Activated CD4-positive, alpha-beta T cell treated with anti-CD3 and anti-CD28 coated beads for 36 hours (primary cell): ENCODE measurements at regions of chr3 and their contacts with region 1.

Region 1: GRCh38 chr3:152193673-152194267 is 75.0 kb upstream of the MBNL1 start:
- DNase-seq: peak; percentile 46
- ATAC-seq: peak; percentile 49
- H3K4me3 Mint-ChIP-seq: peak overlapping the region; percentile 66
- H3K27ac Mint-ChIP-seq: peak overlapping the region; percentile 74
- H3K4me1 Mint-ChIP-seq: peaks cover 83% of the 10 kb centered on the region
- H3K27me3 Mint-ChIP-seq: no peaks in the 10 kb centered on the region

Region 2: DNA sequence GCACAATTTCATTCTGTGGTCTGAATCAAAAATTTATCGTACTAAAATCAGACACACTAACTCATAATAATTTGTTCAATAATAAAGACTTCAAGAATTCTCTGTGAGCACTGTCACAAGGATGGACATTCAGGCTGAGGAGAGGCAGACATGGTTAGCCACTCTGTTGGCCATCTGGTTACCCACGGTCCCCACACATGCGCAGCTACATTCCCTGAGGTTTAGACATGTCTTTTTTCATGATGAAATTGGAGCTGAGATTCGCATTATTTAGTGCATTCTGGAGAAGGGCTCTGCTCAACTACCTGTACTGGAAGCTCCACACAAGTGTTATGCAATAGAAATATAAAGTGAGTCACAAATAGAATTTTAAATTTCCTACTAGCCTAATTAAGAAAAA is 163.4 kb before region 1 on chr3:
- CTCF ChIA-PET with region 1: no interaction called
- POLR2A ChIA-PET with region 1: no interaction called
- intact Hi-C with region 1: no loop called
- DNase-seq: no peak
- ATAC-seq: no peak
- H3K4me3 Mint-ChIP-seq: no peak overlapping the region
- H3K27ac Mint-ChIP-seq: no peak overlapping the region
- H3K4me1 Mint-ChIP-seq: no peaks in the 10 kb centered on the region
- H3K27me3 Mint-ChIP-seq: no peaks in the 10 kb centered on the region

Region 3: GRCh38 chr3:152127058-152127457 is 66.7 kb before region 1 on chr3:
- CTCF ChIA-PET with region 1: no interaction called
- POLR2A ChIA-PET with region 1: no interaction called
- intact Hi-C with region 1: loop called (anchors 2 to 5 kb)
- DNase-seq: peak; percentile 33
- ATAC-seq: peak; percentile 95
- H3K4me3 Mint-ChIP-seq: peak overlapping the region; percentile 27
- H3K27ac Mint-ChIP-seq: peak overlapping the region; percentile 51
- H3K4me1 Mint-ChIP-seq: peaks cover 26% of the 10 kb centered on the region
- H3K27me3 Mint-ChIP-seq: no peaks in the 10 kb centered on the region

Region 4: DNA sequence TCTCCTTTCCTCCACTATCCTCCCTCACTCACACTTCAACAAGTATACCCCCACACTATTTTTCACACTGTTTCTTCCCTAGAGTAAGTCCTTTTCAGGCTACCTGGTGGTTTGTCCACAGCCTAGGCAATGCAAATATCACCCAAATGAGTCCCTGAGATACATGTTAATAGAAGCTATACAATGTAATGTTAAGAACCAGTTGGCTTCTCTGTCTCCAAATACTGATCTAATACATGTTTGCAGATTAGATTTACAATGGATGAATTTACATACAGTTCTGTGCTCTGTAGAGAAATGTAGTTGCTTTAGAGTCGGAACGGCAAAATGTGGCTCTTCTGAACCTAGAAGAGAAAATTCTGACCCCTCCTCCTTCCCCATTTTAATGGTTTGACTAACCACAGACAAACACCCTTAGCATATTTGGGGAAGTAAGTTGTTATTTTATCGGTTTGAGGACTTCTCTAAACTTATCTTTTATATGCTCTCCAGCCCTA is 11.4 kb after region 1 on chr3:
- CTCF ChIA-PET with region 1: interaction called, 14 read pairs
- POLR2A ChIA-PET with region 1: interaction called, 3 read pairs
- intact Hi-C with region 1: loop called (anchors 1 kb)
- DNase-seq: no peak
- ATAC-seq: no peak
- H3K4me3 Mint-ChIP-seq: peak overlapping the region; percentile 70
- H3K27ac Mint-ChIP-seq: peak overlapping the region; percentile 92
- H3K4me1 Mint-ChIP-seq: peaks cover 65% of the 10 kb centered on the region
- H3K27me3 Mint-ChIP-seq: no peaks in the 10 kb centered on the region

Region 5: DNA sequence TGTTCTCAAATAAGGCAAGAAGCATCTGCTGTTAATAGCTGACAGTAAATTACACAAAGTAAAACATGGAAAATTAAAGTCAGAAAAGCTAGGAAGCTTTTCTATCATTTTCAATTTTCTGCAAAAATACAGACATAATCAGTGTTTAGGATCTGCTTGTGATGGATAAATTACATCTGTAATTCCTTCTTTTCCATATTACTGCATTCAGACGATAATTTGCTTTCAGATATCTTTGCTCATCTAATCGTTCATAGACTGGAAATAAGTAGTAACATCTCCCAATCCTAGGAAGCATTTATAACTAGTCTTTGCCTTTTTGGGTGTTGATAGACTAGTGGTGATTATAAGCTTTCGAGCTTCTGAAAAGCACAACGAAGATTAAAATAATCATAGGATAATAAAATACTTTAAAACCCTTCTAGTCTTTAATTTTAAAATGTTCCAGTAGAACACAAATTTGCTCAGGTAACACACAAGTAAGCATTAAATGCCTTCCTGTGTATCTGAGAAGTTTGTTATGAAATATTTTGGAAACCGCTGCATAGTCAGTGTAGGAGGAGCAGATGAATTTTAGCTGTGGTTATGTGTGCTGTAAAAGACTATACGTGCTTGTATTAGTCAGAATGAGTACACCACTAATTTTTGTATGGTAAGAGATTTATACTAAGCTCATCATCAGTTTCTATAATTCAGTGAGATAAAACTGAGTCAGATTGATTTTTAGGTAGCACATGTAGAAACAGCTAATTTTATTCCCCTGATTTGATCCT is 116.0 kb after region 1 on chr3:
- CTCF ChIA-PET with region 1: interaction called, 3 read pairs
- POLR2A ChIA-PET with region 1: no interaction called
- intact Hi-C with region 1: loop called in 1 of 2 experiments (anchors 5 kb)
- DNase-seq: no peak
- ATAC-seq: peak; percentile 94
- H3K4me3 Mint-ChIP-seq: no peak overlapping the region
- H3K27ac Mint-ChIP-seq: peak overlapping the region; percentile 6
- H3K4me1 Mint-ChIP-seq: peaks cover 74% of the 10 kb centered on the region
- H3K27me3 Mint-ChIP-seq: no peaks in the 10 kb centered on the region

Region 6: GRCh38 chr3:152444029-152444641 is 250.4 kb after region 1 on chr3:
- CTCF ChIA-PET with region 1: interaction called, 4 read pairs
- POLR2A ChIA-PET with region 1: interaction called, 3 read pairs
- intact Hi-C with region 1: loop called in 1 of 2 experiments (anchors 5 kb)
- DNase-seq: no peak
- ATAC-seq: no peak
- H3K4me3 Mint-ChIP-seq: no peak overlapping the region
- H3K27ac Mint-ChIP-seq: peak overlapping the region; percentile 43
- H3K4me1 Mint-ChIP-seq: peaks cover 64% of the 10 kb centered on the region
- H3K27me3 Mint-ChIP-seq: no peaks in the 10 kb centered on the region

Region 7: DNA sequence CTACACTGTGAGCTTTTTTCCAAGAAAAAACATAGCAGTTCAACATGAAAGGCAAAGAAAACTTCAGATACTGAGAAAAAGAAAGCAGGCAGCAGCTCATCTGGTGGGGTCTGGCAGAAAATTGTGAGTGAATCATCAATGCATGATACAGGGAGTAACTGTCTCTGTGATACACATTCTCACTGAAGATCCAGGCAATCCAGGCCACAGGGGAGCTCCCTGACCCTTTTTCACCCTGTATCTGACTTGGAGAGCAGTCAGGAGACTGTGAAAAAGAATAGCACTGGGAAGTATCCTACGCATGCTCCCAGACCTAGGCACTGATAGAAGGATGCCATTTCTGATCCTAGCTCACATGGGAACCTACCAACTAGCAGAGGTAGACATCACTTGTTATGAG is 344.7 kb after region 1 on chr3:
- CTCF ChIA-PET with region 1: no interaction called
- POLR2A ChIA-PET with region 1: no interaction called
- intact Hi-C with region 1: no loop called
- DNase-seq: no peak
- ATAC-seq: no peak
- H3K4me3 Mint-ChIP-seq: no peak overlapping the region
- H3K27ac Mint-ChIP-seq: no peak overlapping the region
- H3K4me1 Mint-ChIP-seq: no peaks in the 10 kb centered on the region
- H3K27me3 Mint-ChIP-seq: peaks cover 23% of the 10 kb centered on the region